ENCODE measurements at regions of chr13 and their contacts with region 1.

Region 1: GRCh38 chr13:81017513-81018152 is 676.7 kb upstream of the SPRY2 start:
- DNase-seq: peak; percentile 23
- CTCF ChIP-seq: peak; percentile 54

Region 2: GRCh38 chr13:80979035-80979641 is 38.5 kb before region 1 on chr13:
- CTCF ChIA-PET with region 1: interaction called, 20 read pairs
- POLR2A ChIA-PET with region 1: no interaction called
- DNase-seq: peak; percentile 42
- CTCF ChIP-seq: peak; percentile 84

Region 3: GRCh38 chr13:81031996-81032395 is 14.4 kb after region 1 on chr13:
- CTCF ChIA-PET with region 1: interaction called, 14 read pairs
- POLR2A ChIA-PET with region 1: no interaction called
- DNase-seq: no peak
- CTCF ChIP-seq: no peak

Measured in GM10248 (cell line).